Dorsolateral prefrontal cortex (tissue), 120 donors: ENCODE measurements at regions of chr20 and their contacts with region 1.

Region 1: GRCh38 chr20:57089691-57090150 is 176.7 kb downstream of the BMP7 start:
- DNase-seq: peak; percentile 32 to 87 (median 74)
- H3K4me3 ChIP-seq: no peak overlapping the region
- H3K27ac ChIP-seq: no peak overlapping the region
- H3K27me3 ChIP-seq: peaks cover 0 to 29% (median 0%) of the 10 kb centered on the region in 45 donors
- CTCF ChIP-seq: peak; percentile 73 to 99 (median 96)

Region 2: GRCh38 chr20:56392282-56393137 is 697.2 kb before region 1 on chr20 and contains the start of gene CSTF1:
- intact Hi-C with region 1: loop called in 1 of 2 experiments (anchors 10 kb)
- DNase-seq: peak; percentile 97 to 99 (median 99)
- H3K4me3 ChIP-seq: peak within 1 kb of the TSS; percentile 60 to 99 (median 91)
- H3K27ac ChIP-seq: peak within 1 kb of the TSS; percentile 36 to 96 (median 89)
- H3K27me3 ChIP-seq: no peaks in the 10 kb centered on the region
- CTCF ChIP-seq: peak in 27 of 56 donors; percentile 5 to 61 (median 27)
- total RNA-seq, gene CSTF1: 15.8 to 37.3 (median 25.6) TPM

Region 3: GRCh38 chr20:56925082-56925830 is 164.5 kb before region 1 on chr20:
- intact Hi-C with region 1: no loop called
- DNase-seq: peak in 8 of 10 donors; percentile 5 to 80 (median 32)
- H3K4me3 ChIP-seq: peak overlapping the region in 58 of 59 donors; percentile 9 to 65 (median 40)
- H3K27ac ChIP-seq: no peak overlapping the region
- H3K27me3 ChIP-seq: peaks cover 3 to 97% (median 71%) of the 10 kb centered on the region in 45 donors
- CTCF ChIP-seq: no peak

Region 4: DNA sequence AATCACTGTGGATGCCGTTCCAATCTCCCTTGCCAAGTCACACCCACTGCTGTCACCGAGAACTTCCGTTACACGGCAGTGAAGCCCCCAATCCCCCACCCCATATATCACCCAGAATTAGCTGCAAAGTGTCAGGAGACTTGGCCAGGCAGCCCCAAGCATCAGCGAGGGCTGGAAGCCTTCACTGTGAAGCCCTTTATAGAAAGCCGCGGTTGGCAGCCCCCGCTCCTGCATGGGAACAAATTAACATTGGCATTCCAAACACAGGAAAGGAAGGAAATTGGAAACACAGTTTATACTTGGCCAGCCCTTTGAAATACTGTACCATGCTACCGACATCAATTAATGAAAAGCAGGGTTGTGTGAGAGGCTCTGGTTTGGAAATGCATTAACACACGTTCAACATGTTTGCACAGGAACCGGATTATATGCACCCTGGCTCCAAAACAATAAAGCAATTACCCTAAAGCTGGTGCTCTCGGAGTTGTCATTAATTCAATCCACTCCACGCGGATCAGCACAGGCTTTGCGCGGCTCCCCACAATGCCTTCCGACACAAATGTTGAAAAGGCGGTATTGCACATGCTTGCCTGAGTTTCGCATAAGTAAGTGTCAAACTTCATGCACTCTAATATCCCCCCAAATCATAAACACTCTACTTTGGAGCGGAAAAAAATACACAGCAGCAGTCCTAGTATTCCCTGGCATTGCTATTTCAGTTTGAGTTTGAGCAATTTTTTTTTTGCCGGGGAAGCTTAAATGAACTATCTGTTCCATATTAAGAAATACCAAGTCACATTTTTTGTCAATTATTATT is 169.6 kb after region 1 on chr20:
- intact Hi-C with region 1: loop called (anchors 5 to 10 kb)
- DNase-seq: peak in 2 of 10 donors; percentile 28 to 64
- H3K4me3 ChIP-seq: peak overlapping the region in 46 of 59 donors; percentile 0 to 57 (median 26)
- H3K27ac ChIP-seq: peak overlapping the region in 27 of 59 donors; percentile 1 to 86 (median 33)
- H3K27me3 ChIP-seq: peaks cover 0 to 81% (median 34%) of the 10 kb centered on the region in 45 donors
- CTCF ChIP-seq: no peak

Region 5: GRCh38 chr20:57282670-57283361 is 193.1 kb after region 1 on chr20:
- intact Hi-C with region 1: loop called in 1 of 2 experiments (anchors 5 kb)
- DNase-seq: peak in 2 of 10 donors; percentile 47 to 55
- H3K4me3 ChIP-seq: peak overlapping the region in 49 of 59 donors; percentile 4 to 59 (median 26)
- H3K27ac ChIP-seq: peak overlapping the region in 57 of 59 donors; percentile 21 to 96 (median 86)
- H3K27me3 ChIP-seq: peaks cover 0 to 12% (median 0%) of the 10 kb centered on the region in 45 donors
- CTCF ChIP-seq: peak in 47 of 56 donors; percentile 7 to 66 (median 40)

Region 6: GRCh38 chr20:57493091-57493615 is 403.4 kb after region 1 on chr20:
- intact Hi-C with region 1: loop called (anchors 5 to 10 kb)
- DNase-seq: no peak
- H3K4me3 ChIP-seq: no peak overlapping the region
- H3K27ac ChIP-seq: no peak overlapping the region
- H3K27me3 ChIP-seq: no peaks in the 10 kb centered on the region
- CTCF ChIP-seq: no peak